ENCODE measurements at regions of chr3 and their contacts with region 1.

Region 1: GRCh38 chr3:196274585-196274984 is 12.9 kb downstream of the PCYT1A start:
- DNase-seq: peak; percentile 79
- ATAC-seq: peak; percentile 84
- H3K4me3 Mint-ChIP-seq: peak overlapping the region; percentile 56
- H3K27ac Mint-ChIP-seq: peak overlapping the region; percentile 95
- H3K4me1 Mint-ChIP-seq: peaks cover 65% of the 10 kb centered on the region
- H3K27me3 Mint-ChIP-seq: no peaks in the 10 kb centered on the region

Region 2: GRCh38 chr3:195475614-195476013 is 799.0 kb before region 1 on chr3:
- CTCF ChIA-PET with region 1: no interaction called
- POLR2A ChIA-PET with region 1: no interaction called
- intact Hi-C with region 1: no loop called
- DNase-seq: no peak
- ATAC-seq: no peak
- H3K4me3 Mint-ChIP-seq: no peak overlapping the region
- H3K27ac Mint-ChIP-seq: no peak overlapping the region
- H3K4me1 Mint-ChIP-seq: no peaks in the 10 kb centered on the region
- H3K27me3 Mint-ChIP-seq: peaks cover 6% of the 10 kb centered on the region

Region 3: DNA sequence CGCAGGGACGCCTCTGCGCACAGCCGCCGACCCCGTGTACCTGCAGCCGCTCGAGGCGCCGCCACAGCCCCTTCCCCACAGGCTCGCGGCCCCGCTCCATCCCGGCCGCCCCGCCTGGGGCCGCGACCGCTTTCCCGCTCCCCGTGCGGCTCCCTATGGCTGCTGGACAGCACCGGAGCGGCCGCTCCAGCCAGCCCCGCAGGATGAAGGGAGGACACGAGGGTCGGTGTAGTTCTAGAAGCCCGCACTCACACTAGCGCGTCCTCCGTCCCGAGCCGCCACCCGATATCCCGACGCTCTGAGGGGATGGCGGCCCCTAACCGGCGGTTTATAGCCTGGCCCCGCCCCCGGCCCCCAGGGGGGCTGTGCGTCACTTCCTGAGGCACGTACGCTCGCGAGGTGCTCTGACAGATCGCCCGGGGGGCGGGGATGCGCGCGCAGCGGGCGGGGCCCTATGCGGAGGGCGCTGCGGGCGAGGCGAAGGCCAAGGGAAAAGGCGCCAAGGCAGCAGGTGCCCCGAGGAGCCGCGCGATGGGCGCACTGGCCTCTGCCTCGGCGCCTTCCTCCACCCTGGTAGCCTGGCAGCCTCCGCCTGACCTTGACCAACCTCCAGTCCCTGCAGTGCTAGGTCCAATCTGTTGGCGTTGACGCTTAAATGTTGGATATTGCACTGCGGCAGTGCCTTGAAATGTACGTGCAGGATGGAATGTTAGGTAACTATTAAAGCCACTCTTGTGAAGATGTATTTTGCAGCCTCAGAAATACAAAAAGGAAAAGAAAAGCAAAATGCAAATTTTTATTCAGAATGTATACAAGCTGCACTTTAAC is 192.6 kb before region 1 on chr3 and contains the start of gene TFRC:
- CTCF ChIA-PET with region 1: no interaction called
- POLR2A ChIA-PET with region 1: no interaction called
- intact Hi-C with region 1: loop called in 1 of 2 experiments (anchors 1 kb)
- DNase-seq: peak; percentile 98
- ATAC-seq: peak; percentile 92
- H3K4me3 Mint-ChIP-seq: peak within 1 kb of the TSS; percentile 95
- H3K27ac Mint-ChIP-seq: peak within 1 kb of the TSS; percentile 93
- H3K4me1 Mint-ChIP-seq: peaks cover 30% of the 10 kb centered on the region
- H3K27me3 Mint-ChIP-seq: no peaks in the 10 kb centered on the region
- total RNA-seq, gene TFRC: 373 to 520 TPM

Region 4: GRCh38 chr3:196192036-196192523 is 82.5 kb before region 1 on chr3:
- CTCF ChIA-PET with region 1: no interaction called
- POLR2A ChIA-PET with region 1: no interaction called
- intact Hi-C with region 1: no loop called
- DNase-seq: peak; percentile 70
- ATAC-seq: peak; percentile 62
- H3K4me3 Mint-ChIP-seq: peak overlapping the region; percentile 40
- H3K27ac Mint-ChIP-seq: peak overlapping the region; percentile 95
- H3K4me1 Mint-ChIP-seq: peaks cover 31% of the 10 kb centered on the region
- H3K27me3 Mint-ChIP-seq: no peaks in the 10 kb centered on the region

Region 5: DNA sequence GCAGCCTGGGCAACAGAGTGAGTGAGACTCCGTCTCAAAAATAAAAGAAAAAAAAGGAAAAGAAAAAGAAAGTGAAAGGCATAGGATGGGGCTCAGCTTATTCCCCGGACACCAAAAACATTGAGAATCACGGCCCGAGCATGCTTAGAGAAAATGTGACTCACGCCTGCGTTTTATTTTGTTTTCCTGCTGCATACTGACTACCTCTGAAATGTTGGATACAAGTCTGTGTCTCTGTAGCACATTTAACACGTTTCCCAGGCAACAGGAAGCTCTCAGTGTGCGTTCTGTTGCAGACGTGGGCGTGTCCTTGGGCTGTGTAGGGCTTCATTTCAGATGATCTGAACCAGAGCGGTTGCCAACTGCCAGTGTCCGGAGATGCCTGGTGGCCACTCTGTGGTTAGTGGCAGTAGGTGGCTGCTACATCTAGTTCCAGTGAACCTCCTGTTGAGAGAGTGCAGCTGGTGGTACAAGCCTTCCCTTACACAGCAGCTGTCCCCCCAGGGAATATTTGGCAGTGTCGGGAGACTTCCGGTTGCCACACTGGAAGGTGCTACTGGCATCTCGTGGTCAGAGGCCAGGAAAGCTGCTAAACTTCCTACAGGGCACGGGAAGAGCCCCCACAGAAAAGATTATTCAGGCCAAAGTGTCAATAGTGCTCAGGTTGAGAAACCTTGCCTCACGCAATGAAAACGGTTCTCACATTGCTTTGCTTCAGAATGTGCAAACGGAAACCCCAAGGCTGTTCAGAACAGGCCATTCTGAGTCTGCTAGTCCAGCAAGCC is 55.2 kb before region 1 on chr3:
- CTCF ChIA-PET with region 1: no interaction called
- POLR2A ChIA-PET with region 1: no interaction called
- intact Hi-C with region 1: loop called in 1 of 2 experiments (anchors 2 kb)
- DNase-seq: peak; percentile 81
- ATAC-seq: peak; percentile 95
- H3K4me3 Mint-ChIP-seq: peak overlapping the region; percentile 69
- H3K27ac Mint-ChIP-seq: peak overlapping the region; percentile 80
- H3K4me1 Mint-ChIP-seq: peaks cover 12% of the 10 kb centered on the region
- H3K27me3 Mint-ChIP-seq: peaks cover 3% of the 10 kb centered on the region

Region 6: GRCh38 chr3:196287440-196288148 is 13.0 kb after region 1 on chr3 and contains the start of gene PCYT1A:
- CTCF ChIA-PET with region 1: interaction called, 6 read pairs
- POLR2A ChIA-PET with region 1: interaction called, 4 read pairs
- intact Hi-C with region 1: loop called (anchors 1 kb)
- DNase-seq: peak; percentile 86
- ATAC-seq: peak; percentile 90
- H3K4me3 Mint-ChIP-seq: peak within 1 kb of the TSS; percentile 98
- H3K27ac Mint-ChIP-seq: peak within 1 kb of the TSS; percentile 97
- H3K4me1 Mint-ChIP-seq: peaks cover 34% of the 10 kb centered on the region
- H3K27me3 Mint-ChIP-seq: no peaks in the 10 kb centered on the region
- total RNA-seq, gene PCYT1A: 41.8 to 47.1 TPM

Region 7: DNA sequence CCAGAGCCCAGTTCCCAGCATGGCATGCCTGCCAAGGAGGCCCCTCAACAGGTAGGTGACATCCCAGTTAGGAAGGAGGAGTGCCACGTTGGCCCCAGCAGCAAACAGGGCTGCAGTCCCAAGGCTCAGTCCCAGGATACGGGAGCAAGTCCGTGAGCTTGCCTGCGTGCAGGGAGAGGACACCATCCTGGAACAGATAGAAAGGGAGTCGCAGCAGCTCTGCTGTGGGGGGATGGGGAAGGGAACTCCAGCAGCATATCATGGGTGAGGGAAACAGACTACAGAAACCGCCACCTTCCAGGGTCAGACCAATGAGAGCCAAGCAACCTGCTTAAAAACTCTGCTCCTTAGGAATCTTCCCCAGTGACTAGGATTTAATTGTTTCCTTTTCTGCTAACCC is 52.8 kb after region 1 on chr3:
- CTCF ChIA-PET with region 1: no interaction called
- POLR2A ChIA-PET with region 1: no interaction called
- intact Hi-C with region 1: no loop called
- DNase-seq: no peak
- ATAC-seq: no peak
- H3K4me3 Mint-ChIP-seq: no peak overlapping the region
- H3K27ac Mint-ChIP-seq: no peak overlapping the region
- H3K4me1 Mint-ChIP-seq: no peaks in the 10 kb centered on the region
- H3K27me3 Mint-ChIP-seq: no peaks in the 10 kb centered on the region

Region 8: DNA sequence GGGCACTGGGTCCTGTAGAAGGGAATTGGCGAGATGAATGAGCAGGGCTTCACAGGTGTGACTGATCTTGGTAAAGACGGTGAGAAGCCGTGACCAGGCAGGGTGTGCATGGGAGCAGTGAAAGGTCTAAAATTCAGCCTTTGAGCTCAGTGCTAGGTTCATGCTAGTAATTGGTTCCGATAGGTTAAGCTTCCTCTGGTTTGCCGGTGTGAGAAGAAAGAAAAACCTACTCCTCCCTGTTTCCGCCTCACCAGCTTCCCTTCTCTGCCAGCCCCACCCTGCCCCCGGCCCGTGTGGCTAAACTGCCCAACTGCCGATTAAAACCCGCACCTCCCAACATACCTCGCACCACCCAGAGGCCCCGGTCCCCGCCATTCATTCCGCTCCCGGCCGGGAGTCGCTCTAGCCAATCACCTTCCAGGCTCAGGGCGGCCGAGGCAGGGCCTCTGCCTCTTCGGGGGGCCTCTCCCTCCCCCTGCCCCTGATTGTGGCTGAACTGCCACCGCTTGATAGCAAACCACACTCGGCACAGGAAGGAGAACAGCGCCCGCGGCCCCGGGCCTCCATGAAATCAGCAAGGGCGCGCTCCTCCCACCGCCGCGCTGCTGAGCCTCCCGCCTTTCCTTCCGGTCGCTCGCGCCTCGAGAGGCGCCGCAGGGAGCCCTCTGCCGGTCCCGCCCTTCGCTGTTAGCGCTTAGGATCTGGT is 357.6 kb after region 1 on chr3:
- CTCF ChIA-PET with region 1: no interaction called
- POLR2A ChIA-PET with region 1: no interaction called
- intact Hi-C with region 1: loop called in 1 of 2 experiments (anchors 10 kb)
- DNase-seq: peak; percentile 93
- ATAC-seq: peak; percentile 80
- H3K4me3 Mint-ChIP-seq: peak overlapping the region; percentile 81
- H3K27ac Mint-ChIP-seq: peak overlapping the region; percentile 95
- H3K4me1 Mint-ChIP-seq: peaks cover 55% of the 10 kb centered on the region
- H3K27me3 Mint-ChIP-seq: no peaks in the 10 kb centered on the region

Measured in activated CD4-positive, alpha-beta T cell treated with anti-CD3 and anti-CD28 coated beads for 36 hours (primary cell).